ENCODE measurements at regions of chr15 and their contacts with region 1.

Region 1: GRCh38 chr15:70504299-70504951 is 258.9 kb downstream of the UACA start:
- H3K4me3 ChIP-seq: no peak overlapping the region
- H3K27ac ChIP-seq: peak overlapping the region; percentile 78
- H3K4me1 ChIP-seq: peaks cover 54% of the 10 kb centered on the region
- CTCF ChIP-seq: no peak

Region 2: GRCh38 chr15:70528270-70528706 is 23.9 kb after region 1 on chr15:
- CTCF ChIA-PET with region 1: interaction called, 11 read pairs
- POLR2A ChIA-PET with region 1: interaction called, 14 read pairs
- H3K4me3 ChIP-seq: no peak overlapping the region
- H3K27ac ChIP-seq: peak overlapping the region; percentile 97; the same call in 1 of the 2 replicates
- H3K4me1 ChIP-seq: peaks cover 29% of the 10 kb centered on the region
- CTCF ChIP-seq: no peak

Region 3: GRCh38 chr15:70569091-70569621 is 64.7 kb after region 1 on chr15:
- CTCF ChIA-PET with region 1: interaction called, 20 read pairs
- POLR2A ChIA-PET with region 1: no interaction called
- H3K4me3 ChIP-seq: no peak overlapping the region
- H3K27ac ChIP-seq: peak overlapping the region; percentile 20; the same call in 1 of the 2 replicates
- H3K4me1 ChIP-seq: peaks cover 15% of the 10 kb centered on the region
- CTCF ChIP-seq: peak; percentile 94

Region 4: GRCh38 chr15:70964058-70964457 is 459.6 kb after region 1 on chr15:
- CTCF ChIA-PET with region 1: no interaction called
- POLR2A ChIA-PET with region 1: no interaction called
- H3K4me3 ChIP-seq: no peak overlapping the region
- H3K27ac ChIP-seq: no peak overlapping the region
- H3K4me1 ChIP-seq: no peaks in the 10 kb centered on the region
- CTCF ChIP-seq: no peak

Measured in HEK293 (cell line).